HepG2 (cell line): ENCODE measurements at regions of chr9 and their contacts with region 1.

Region 1: GRCh38 chr9:15306757-15307534 is at the start of gene TTC39B:
- DNase-seq: peak; percentile 87
- ATAC-seq: peak; percentile 92
- H3K4me3 ChIP-seq: peak within 1 kb of the TSS; percentile 73 to 94 (median 83)
- H3K27ac ChIP-seq: peak within 1 kb of the TSS; percentile 69
- H3K4me1 ChIP-seq: peaks cover 36% of the 10 kb centered on the region
- H3K27me3 ChIP-seq: no peaks in the 10 kb centered on the region
- CTCF ChIP-seq: peak; percentile 50
- EP300 ChIP-seq: 0 out of 4 replicates have a peak, but pooled peaks of 1 of the 2 experiments have one; percentile 23
- POLR2A ChIP-seq: peak; percentile 52 to 70; a peak in 3 of 4 replicates
- RAD21 ChIP-seq: peak; percentile 27; the same call in 1 of the 2 replicates
- total RNA-seq, gene TTC39B: 18.5 and 19.4 TPM in 2 replicates

Region 2: GRCh38 chr9:15262581-15262980 is 44.4 kb before region 1 on chr9:
- CTCF ChIA-PET with region 1: no interaction called
- POLR2A ChIA-PET with region 1: no interaction called
- in situ Hi-C with region 1: no loop called
- intact Hi-C with region 1: no loop called
- DNase-seq: no peak
- ATAC-seq: no peak
- H3K4me3 ChIP-seq: no peak overlapping the region
- H3K27ac ChIP-seq: no peak overlapping the region
- H3K4me1 ChIP-seq: no peaks in the 10 kb centered on the region
- H3K27me3 ChIP-seq: no peaks in the 10 kb centered on the region
- CTCF ChIP-seq: no peak
- EP300 ChIP-seq: no peak
- POLR2A ChIP-seq: no peak
- RAD21 ChIP-seq: no peak

Region 3: DNA sequence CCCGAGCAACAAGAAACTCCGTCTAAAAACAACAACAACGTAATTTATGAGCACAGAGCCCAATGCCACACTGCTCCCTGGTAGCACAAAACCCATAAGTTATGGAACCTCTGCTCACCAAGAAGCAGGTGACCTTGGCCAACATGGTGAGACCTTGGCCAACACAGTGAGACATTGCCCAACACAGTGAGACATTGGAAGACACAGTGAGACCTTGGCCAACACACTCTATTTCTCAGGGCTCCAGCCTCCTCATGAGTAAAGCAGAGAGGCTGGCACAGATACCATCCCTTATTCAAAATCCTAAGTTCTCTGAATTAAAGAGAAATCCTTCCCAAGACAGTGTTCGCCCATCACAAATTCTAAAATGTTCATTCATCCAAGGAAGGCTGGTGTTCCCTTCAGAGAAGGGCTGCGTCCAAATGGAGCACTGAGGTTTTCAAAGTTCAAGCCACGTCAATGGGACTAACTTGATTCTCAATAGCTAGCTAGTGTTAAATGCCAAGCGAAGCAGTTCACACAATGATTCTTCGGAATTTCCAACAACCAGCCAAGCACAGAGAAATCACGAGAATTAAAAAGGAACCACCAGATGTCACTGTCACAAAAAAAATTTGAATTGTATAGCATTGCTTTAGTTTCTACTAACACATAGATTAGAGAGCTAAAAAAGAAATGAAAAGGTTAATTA is 29.4 kb before region 1 on chr9:
- CTCF ChIA-PET with region 1: no interaction called
- POLR2A ChIA-PET with region 1: interaction called, 4 read pairs
- in situ Hi-C with region 1: no loop called
- intact Hi-C with region 1: loop called (anchors 2 kb)
- DNase-seq: peak; percentile 15
- ATAC-seq: no peak
- H3K4me3 ChIP-seq: no peak overlapping the region
- H3K27ac ChIP-seq: no peak overlapping the region
- H3K4me1 ChIP-seq: peaks cover 71% of the 10 kb centered on the region
- H3K27me3 ChIP-seq: no peaks in the 10 kb centered on the region
- CTCF ChIP-seq: peak; percentile 40
- EP300 ChIP-seq: no peak
- POLR2A ChIP-seq: no peak
- RAD21 ChIP-seq: no peak

Region 4: DNA sequence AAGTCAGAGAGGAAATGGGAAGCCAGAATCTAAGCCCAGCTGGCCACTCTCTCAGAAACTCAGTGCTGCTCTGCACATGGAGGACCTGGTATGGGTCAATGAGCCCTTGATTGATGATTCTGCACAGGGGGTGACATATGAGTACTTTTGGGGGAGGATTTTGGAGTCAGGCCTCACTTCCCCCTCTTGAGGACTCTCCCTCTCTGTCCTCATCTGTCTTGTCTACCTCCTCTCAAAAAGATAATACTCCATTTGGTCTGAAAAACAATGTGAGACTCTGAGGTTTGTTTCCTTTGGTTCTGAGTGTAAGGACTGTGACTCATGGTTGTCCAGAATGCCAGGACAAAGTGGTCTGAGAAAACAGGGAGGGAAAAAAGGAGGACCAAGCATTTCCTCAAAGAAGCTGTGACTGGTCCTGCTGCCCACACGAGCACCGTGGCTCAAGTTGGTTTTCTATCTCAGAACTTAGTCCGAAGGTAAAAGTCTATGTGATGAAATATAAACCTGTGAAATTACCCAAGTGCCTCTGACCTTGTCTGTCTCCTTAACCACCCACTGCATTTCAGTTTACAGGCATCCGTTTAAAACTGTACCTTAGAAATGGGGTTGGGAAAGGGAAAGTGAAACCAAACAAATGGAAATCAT is 11.1 kb before region 1 on chr9:
- CTCF ChIA-PET with region 1: no interaction called
- POLR2A ChIA-PET with region 1: interaction called, 15 read pairs
- in situ Hi-C with region 1: no loop called
- intact Hi-C with region 1: no loop called
- DNase-seq: peak; percentile 42
- ATAC-seq: peak; percentile 69
- H3K4me3 ChIP-seq: peak overlapping the region; percentile 41 to 51 (median 41); a peak in 4 of 6 replicates
- H3K27ac ChIP-seq: peak overlapping the region; percentile 70
- H3K4me1 ChIP-seq: peaks cover 61% of the 10 kb centered on the region
- H3K27me3 ChIP-seq: no peaks in the 10 kb centered on the region
- CTCF ChIP-seq: no peak
- EP300 ChIP-seq: peak in 1 of 2 experiments; percentile 36; a peak in 1 of 4 replicates
- POLR2A ChIP-seq: peak in 1 of 2 experiments; percentile 39; a peak in 1 of 4 replicates
- RAD21 ChIP-seq: no peak

Region 5: GRCh38 chr9:15333376-15333881 is 26.5 kb after region 1 on chr9:
- CTCF ChIA-PET with region 1: no interaction called
- POLR2A ChIA-PET with region 1: interaction called, 3 read pairs
- in situ Hi-C with region 1: no loop called
- intact Hi-C with region 1: loop called (anchors 1 kb)
- DNase-seq: peak; percentile 74
- ATAC-seq: peak; percentile 90
- H3K4me3 ChIP-seq: peak overlapping the region in 2 of 3 experiments; percentile 14 to 27; a peak in 2 of 6 replicates
- H3K27ac ChIP-seq: peak overlapping the region; percentile 62
- H3K4me1 ChIP-seq: peaks cover 64% of the 10 kb centered on the region
- H3K27me3 ChIP-seq: no peaks in the 10 kb centered on the region
- CTCF ChIP-seq: no peak
- EP300 ChIP-seq: peak in 1 of 2 experiments; percentile 85; a peak in 2 of 4 replicates
- POLR2A ChIP-seq: no peak
- RAD21 ChIP-seq: no peak

Region 6: DNA sequence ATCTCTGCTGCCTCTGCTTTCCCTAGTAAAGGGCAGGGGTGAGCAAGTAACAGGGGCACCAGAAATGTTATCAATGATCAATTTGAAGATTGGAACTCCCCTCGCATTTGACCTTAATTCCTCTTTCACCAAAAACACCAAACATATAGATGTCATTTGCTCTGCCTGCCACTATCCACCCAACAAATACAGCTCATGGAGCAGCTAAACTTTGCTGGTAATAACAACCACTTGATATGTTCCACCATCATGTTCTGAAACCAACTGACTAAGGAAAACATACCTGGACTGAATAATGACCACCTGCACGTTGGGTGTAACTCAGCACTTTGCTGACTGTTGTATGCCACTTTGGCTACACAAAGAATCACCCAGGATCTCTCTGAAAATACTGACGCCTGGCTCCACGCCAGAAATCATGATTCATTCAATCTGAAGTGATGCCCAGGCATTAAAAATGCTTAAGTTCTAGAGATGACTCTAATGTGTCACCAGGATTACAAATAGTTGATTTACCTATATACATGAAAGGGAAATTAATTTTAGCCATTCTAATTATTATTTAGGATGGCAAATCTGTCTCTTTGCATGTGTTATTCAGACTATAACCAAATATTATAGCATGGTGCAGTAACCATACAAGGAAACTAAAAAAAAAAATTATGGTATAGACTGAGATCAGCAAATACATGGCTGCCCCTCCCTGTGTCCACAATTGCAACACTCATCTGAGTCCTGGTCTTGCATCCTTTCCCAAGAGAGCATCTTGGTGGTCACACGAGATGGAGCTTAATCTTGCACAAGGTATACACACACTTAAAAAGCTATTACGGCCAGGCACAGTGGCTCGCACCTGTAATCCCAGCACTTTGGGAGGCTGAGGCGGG is 43.2 kb after region 1 on chr9:
- CTCF ChIA-PET with region 1: no interaction called
- POLR2A ChIA-PET with region 1: interaction called, 9 read pairs
- in situ Hi-C with region 1: no loop called
- intact Hi-C with region 1: loop called (anchors 1 kb)
- DNase-seq: peak; percentile 88
- ATAC-seq: peak; percentile 12; the same call in 2 of the 3 replicates
- H3K4me3 ChIP-seq: no peak overlapping the region
- H3K27ac ChIP-seq: peak overlapping the region; percentile 83
- H3K4me1 ChIP-seq: peaks cover 89% of the 10 kb centered on the region
- H3K27me3 ChIP-seq: no peaks in the 10 kb centered on the region
- CTCF ChIP-seq: no peak
- EP300 ChIP-seq: peak in 1 of 2 experiments; percentile 82; a peak in 2 of 4 replicates
- POLR2A ChIP-seq: no peak
- RAD21 ChIP-seq: no peak

Region 7: DNA sequence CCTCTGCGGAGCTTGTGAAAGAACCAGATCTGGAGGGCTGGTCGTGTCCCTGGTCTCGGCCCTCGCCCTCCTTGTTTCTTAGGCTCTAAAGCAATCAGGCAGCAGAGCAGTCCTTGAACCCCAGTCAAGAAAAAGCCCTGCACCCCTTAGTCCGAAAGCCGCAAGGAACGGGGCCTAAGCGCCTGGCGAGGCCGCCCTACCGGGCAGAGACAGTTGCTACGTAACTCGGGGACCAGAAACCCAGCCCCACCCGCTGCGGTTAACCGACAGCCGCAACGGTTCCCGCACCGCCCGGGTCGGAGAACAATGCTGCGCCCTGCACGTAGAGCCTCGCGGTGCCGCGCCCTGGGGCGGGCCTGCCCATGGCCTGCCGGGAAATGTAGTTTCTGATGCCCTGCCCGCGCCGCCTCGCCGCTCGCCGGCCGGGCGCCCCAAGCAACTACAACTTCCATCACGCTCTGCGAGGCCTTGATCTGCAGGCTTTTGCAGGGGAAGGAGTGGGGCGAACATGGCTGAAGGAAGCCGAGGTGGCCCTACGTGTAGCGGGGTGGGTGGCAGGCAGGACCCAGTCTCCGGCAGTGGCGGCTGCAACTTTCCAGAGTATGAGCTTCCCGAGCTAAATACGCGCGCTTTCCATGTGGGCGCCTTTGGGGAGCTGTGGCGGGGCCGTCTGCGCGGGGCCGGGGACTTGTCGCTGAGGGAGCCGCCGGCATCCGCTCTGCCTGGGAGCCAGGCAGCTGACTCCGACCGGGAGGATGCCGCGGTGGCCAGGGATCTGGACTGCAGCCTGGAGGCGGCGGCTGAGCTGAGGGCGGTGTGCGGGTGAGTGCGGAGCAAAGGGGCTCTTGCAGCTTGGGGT is 115.7 kb after region 1 on chr9 and contains the start of gene SNAPC3:
- CTCF ChIA-PET with region 1: no interaction called
- POLR2A ChIA-PET with region 1: interaction called, 4 read pairs
- in situ Hi-C with region 1: no loop called
- intact Hi-C with region 1: loop called (anchors 1 kb)
- DNase-seq: peak; percentile 88
- ATAC-seq: peak; percentile 98
- H3K4me3 ChIP-seq: peak within 1 kb of the TSS; percentile 77 to 94 (median 91)
- H3K27ac ChIP-seq: peak within 1 kb of the TSS; percentile 75
- H3K4me1 ChIP-seq: peaks cover 48% of the 10 kb centered on the region
- H3K27me3 ChIP-seq: no peaks in the 10 kb centered on the region; a peak in 1 of 5 replicates
- CTCF ChIP-seq: 0 out of 2 replicates have a peak, but pooled peaks have one; percentile 1
- EP300 ChIP-seq: no peak
- POLR2A ChIP-seq: peak; percentile 81 to 91
- RAD21 ChIP-seq: no peak; the same call in 1 of the 2 replicates
- total RNA-seq, gene SNAPC3: 25.5 and 25.6 TPM in 2 replicates

Region 8: GRCh38 chr9:15543047-15543813 is 236.3 kb after region 1 on chr9:
- CTCF ChIA-PET with region 1: no interaction called
- POLR2A ChIA-PET with region 1: no interaction called
- in situ Hi-C with region 1: no loop called
- intact Hi-C with region 1: no loop called
- DNase-seq: no peak
- ATAC-seq: no peak
- H3K4me3 ChIP-seq: no peak overlapping the region
- H3K27ac ChIP-seq: no peak overlapping the region
- H3K4me1 ChIP-seq: no peaks in the 10 kb centered on the region
- H3K27me3 ChIP-seq: peaks cover 0 to under 1% of the 10 kb centered on the region in 2 experiments; a peak in 1 of 5 replicates
- CTCF ChIP-seq: no peak
- EP300 ChIP-seq: no peak
- POLR2A ChIP-seq: no peak
- RAD21 ChIP-seq: no peak